ENCODE measurements at regions of chr4 and their contacts with region 1.

Region 1: GRCh38 chr4:159446266-159446976 is 343.5 kb downstream of the RAPGEF2 start:
- DNase-seq: no peak

Region 2: GRCh38 chr4:158722917-158723793 is 723.3 kb before region 1 on chr4 and contains the start of gene PPID:
- intact Hi-C with region 1: loop called (anchors 10 kb)
- DNase-seq: peak; percentile 95
- total RNA-seq, gene PPID: 31.9 TPM

Region 3: GRCh38 chr4:158856852-158857251 is 589.6 kb before region 1 on chr4:
- intact Hi-C with region 1: loop called (anchors 5 kb)
- DNase-seq: no peak

Region 4: DNA sequence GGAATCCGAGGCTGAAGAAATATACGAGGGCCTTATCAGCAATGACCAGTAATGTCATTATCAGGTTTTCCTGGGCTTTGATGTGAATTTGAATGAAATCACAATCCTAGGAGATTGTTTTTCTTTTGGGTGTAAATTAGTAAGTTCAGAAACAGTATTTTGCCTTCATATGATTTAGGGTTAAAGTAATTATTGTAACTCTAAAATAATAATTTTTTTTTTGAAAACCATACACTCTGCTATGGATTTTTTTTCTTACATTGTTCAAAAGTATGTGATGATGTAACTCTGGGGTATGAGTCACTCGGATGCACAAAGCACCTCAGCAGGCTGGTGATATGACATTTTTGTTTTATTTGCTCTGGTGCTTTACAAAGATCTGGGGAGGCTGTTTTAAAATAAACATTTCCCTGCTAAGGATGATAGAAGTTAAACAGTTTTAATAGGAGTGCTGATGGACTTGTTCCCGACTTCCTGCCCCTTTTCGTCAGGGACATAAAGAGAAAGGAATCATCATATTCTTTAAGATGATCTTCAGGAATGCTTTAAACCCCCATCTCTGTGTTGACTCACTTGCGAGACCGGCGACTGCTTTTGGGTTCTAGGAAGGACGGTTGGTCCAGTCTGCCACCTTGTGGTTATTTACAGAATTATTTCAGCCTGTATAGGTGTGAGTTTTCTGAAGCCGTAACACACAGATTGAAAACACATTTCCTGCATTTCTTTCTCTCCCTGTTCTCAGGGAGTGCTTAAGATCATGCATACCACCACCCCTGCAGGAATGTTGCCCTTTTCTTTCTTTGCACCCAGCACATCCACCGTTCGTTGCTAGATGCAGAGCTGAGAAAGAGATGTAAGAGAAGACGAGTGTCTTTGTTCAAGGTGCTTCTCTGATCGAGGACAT is 271.1 kb before region 1 on chr4:
- intact Hi-C with region 1: loop called (anchors 10 kb)
- DNase-seq: no peak

Region 5: DNA sequence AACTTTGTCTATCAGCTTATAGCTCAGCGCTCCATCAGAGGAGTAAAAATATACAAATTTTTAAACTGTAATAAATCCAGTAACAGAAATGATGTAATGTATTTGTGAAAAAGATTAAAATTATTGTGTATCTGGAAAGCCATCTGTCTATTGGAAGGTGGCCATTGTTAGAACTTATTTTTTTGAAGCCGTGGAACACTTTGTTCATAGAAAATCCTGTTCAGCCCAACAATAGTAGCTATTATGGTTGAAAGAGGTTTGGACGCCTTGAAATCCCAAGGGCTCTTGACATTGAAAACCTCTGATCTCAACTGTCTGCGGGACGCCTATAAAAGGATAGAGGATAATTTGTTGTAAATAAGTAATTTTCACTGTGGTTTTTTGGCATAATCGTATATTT is 245.3 kb before region 1 on chr4:
- intact Hi-C with region 1: loop called (anchors 5 kb)
- DNase-seq: no peak

Region 6: DNA sequence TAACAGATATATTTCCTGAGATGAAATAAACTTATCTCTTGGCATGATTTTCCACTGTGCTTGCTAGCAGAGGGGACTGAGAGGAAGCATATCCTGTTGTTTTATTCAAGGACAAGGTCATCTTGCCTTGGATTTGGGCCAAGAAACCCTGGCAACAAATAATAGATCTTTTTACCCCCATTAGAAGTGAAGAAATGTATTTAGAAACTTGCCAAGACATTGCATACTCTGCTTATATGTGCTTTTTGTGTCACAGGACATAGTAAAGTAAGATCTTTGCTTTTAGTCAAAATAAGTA is 173.3 kb before region 1 on chr4:
- intact Hi-C with region 1: loop called (anchors 10 kb)
- DNase-seq: no peak

Measured in cardiac septum (tissue), 1 donor.